Activated T-helper 1 cell treated with anti-CD3 and anti-CD28 coated beads, Interleukin-12 subunit alpha, Interleukin-12 subunit beta, Interleukin-2, Interleukin-4 antibody, amounts not matched to agents 30 ng/mL and 10 ng/mL and 1 ng/mL, durations not matched to agents 14 hours and 24 hours and 36 hours (primary cell): ENCODE measurements at regions of chr16 and their contacts with region 1.

Region 1: DNA sequence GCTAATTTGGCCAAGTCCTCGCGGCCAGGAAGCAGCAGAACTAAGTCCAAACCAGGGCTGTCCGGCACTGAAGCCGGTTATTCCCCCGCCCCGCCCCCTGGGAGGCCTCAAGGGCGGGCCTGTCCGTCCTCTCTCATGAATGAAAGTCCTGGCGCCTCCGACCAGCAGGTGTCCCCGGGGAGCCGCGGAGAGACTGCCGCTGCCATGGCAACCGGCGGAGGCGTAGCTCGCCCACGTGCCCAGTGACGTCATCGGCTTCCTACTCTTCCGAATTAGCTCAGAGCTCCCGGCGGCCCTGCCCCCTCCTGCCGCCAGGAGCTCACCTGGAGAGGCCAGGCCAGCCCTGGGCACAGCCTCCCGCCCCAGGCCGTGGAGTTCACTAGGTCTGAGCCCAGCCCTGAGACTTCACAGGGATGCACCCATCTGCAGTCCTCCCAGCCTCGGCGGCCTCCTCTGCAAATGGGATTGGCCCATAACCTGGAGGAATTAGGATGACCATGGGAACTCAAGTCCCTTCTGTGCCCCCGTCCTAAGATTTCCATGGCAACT is 1.3 kb downstream of the SPATA2L start:
- DNase-seq: peak; percentile 96
- H3K4me3 Mint-ChIP-seq: peak overlapping the region; percentile 75
- H3K27ac Mint-ChIP-seq: peak overlapping the region; percentile 84
- H3K4me1 Mint-ChIP-seq: peaks cover 6% of the 10 kb centered on the region
- H3K27me3 Mint-ChIP-seq: no peaks in the 10 kb centered on the region

Region 2: DNA sequence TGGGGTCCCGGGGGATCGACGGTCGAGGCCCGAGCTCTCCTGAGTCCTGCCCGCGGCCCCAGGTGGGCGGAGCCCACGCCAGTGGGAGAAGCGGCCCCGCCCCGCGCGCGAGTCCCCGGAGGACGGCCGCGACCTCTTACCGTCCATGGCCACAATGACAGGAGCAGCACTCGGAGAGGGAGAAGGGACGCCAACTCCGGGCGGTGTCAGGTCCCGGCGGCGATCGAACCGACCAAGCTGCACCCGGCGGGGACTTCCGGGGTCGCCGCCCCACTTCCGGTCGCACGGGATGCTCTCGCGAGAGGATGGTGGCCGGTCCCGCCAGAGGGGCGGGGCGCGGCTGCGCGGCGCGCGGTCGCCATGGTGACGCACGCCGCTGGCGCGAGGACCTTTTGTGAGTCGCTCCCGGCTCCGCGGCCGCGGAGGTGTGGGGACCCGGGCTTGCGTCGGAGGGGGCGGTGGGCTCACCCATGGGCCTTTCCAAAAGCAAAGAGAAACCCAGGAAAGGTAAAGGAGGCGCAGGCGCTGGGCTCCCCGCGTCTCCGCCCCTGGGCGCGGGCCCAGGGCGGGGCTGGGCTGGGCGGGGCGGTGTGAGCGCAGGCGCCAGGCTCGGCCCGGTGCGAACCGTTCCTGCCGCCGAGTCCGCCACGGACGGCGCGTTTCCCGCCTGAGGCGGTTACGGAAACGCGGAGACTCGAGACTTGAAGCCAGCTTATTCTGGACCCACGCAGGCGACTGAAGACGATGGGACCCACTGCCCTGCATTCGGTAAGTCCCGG is 42.5 kb before region 1 on chr16 and contains the starts of genes CHMP1A and SPATA33:
- intact Hi-C with region 1: loop called (anchors 1 kb)
- DNase-seq: peak; percentile 91
- H3K4me3 Mint-ChIP-seq: peak within 1 kb of the TSS; percentile 93
- H3K27ac Mint-ChIP-seq: peak within 1 kb of the TSS; percentile 84
- H3K4me1 Mint-ChIP-seq: peaks cover 56% of the 10 kb centered on the region
- H3K27me3 Mint-ChIP-seq: no peaks in the 10 kb centered on the region
- total RNA-seq, gene CHMP1A: 85.7 and 87.7 TPM in 2 replicates
- total RNA-seq, gene SPATA33: 15.1 and 16.1 TPM in 2 replicates

Region 3: DNA sequence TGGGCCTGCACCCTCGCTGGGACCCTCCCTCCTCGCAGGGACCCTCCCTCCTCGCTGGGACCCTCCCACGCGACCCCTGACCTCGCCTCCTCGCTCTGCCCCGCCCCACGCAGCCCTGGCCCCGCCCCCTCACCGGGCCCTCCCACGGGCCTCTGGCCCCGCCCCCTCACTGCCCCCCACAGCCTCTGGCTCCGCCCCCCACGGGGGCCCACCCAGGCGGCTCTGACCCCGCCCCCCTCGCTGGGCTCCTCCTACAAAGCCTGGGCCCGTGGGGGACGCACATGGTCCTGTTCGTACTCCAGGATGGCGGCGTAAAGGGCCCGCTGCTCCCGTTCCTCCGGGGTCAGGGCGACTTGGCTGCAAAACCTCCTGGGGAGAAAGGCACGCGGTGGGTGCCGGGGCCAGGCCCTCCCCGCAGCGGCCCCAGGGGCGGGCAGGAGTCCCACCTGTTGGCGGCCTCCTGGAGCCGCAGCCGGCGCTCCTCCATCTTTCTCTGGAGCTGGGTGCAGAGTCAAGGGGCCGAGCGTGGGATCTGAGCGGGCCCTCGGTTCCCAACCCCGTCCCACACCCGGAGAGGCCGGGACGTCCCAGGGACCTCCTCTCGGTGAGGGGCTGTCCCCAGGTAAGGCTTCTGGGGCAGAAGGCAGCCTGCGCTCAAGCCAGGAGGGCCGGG is 11.6 kb after region 1 on chr16:
- intact Hi-C with region 1: loop called (anchors 1 kb)
- DNase-seq: peak; percentile 57
- H3K4me3 Mint-ChIP-seq: peak overlapping the region; percentile 81
- H3K27ac Mint-ChIP-seq: no peak overlapping the region
- H3K4me1 Mint-ChIP-seq: no peaks in the 10 kb centered on the region
- H3K27me3 Mint-ChIP-seq: no peaks in the 10 kb centered on the region

Region 4: DNA sequence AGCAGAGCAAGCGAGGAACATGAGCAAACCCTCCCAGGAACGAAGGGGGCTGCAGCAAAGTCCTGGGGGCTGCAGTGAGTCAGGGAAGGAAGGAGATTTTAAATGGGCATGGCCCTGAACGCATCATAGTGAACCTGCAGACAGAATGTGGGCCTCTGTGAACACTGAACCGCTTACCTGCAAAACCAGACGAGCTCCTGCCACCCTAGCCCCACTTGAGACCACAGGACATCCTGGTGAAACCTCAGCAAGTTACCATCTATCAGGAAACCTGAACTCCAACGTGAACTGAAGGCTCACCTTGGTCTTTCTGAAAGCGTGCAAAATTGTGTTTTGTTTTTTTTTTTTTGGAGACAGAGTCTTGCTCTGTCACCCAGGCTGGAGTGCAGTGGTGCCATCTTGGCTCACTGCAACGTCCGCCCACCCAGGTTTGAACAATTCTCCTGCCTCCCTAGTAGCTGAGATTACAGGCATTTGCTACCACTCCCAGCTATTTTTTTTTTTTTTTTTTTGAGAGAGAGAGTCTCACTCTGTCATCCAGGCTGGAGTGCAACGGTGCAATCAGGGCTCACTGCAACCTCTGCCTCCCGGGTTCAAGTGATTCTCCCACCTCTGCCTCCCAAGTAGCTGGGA is 85.5 kb after region 1 on chr16:
- intact Hi-C with region 1: no loop called
- DNase-seq: peak; percentile 9
- H3K4me3 Mint-ChIP-seq: peak overlapping the region; percentile 15
- H3K27ac Mint-ChIP-seq: peak overlapping the region; percentile 40
- H3K4me1 Mint-ChIP-seq: peaks cover 24% of the 10 kb centered on the region
- H3K27me3 Mint-ChIP-seq: no peaks in the 10 kb centered on the region

Region 5: GRCh38 chr16:89828199-89828778 is 128.1 kb after region 1 on chr16 and contains the start of gene SPIRE2:
- intact Hi-C with region 1: loop called (anchors 1 kb)
- DNase-seq: peak; percentile 76
- H3K4me3 Mint-ChIP-seq: peak within 1 kb of the TSS; percentile 75
- H3K27ac Mint-ChIP-seq: no peak within 1 kb of the TSS
- H3K4me1 Mint-ChIP-seq: no peaks in the 10 kb centered on the region
- H3K27me3 Mint-ChIP-seq: peaks cover 40% of the 10 kb centered on the region
- total RNA-seq, gene SPIRE2: 1.5 and 2.7 TPM in 2 replicates

Region 6: DNA sequence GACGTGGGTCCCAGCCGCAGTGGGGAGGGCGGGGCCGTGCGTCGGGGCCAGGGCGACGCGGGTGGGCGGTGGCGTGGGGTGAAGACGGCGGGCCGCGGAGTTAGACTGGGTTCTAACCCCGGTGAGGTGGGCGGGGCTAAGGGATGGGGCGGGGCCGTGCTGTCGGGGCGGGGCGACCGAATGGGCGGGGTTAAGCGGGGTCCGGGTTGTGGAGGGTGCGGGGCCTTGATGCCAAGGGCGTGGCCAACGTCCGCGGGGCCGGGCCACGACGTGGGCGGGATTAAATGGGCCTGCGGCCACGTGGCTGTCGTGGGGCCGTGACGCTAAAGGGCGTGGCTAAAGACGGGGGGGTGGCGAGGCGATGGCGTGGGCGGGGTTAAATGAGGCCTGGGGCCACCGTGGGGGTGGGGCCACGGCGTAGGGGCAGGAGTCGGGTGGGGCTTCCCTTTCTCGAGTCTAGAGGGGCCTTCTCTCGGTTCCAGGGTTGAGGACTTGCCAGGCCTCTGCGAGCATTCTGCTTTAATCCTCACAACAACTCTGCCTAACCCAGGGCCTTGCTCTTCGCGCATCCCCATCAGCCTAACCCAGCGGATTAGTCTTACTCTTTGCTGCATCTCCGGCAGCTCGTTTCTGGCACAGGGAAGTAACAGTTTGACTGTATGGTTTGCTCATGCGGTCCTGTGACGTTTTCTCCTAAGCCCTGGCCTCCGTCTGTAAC is 174.0 kb after region 1 on chr16:
- intact Hi-C with region 1: loop called (anchors 1 kb)
- DNase-seq: peak; percentile 88
- H3K4me3 Mint-ChIP-seq: peak overlapping the region; percentile 90
- H3K27ac Mint-ChIP-seq: peak overlapping the region; percentile 99
- H3K4me1 Mint-ChIP-seq: peaks cover 11% of the 10 kb centered on the region
- H3K27me3 Mint-ChIP-seq: peaks cover 2% of the 10 kb centered on the region